Right ventricle myocardium superior (tissue), 1 donor: ENCODE measurements at regions of chr20 and their contacts with region 1.

Region 1: GRCh38 chr20:32227744-32228688 is 20.3 kb downstream of the POFUT1 start:
- DNase-seq: peak; percentile 48
- ATAC-seq: peak; percentile 84

Region 2: DNA sequence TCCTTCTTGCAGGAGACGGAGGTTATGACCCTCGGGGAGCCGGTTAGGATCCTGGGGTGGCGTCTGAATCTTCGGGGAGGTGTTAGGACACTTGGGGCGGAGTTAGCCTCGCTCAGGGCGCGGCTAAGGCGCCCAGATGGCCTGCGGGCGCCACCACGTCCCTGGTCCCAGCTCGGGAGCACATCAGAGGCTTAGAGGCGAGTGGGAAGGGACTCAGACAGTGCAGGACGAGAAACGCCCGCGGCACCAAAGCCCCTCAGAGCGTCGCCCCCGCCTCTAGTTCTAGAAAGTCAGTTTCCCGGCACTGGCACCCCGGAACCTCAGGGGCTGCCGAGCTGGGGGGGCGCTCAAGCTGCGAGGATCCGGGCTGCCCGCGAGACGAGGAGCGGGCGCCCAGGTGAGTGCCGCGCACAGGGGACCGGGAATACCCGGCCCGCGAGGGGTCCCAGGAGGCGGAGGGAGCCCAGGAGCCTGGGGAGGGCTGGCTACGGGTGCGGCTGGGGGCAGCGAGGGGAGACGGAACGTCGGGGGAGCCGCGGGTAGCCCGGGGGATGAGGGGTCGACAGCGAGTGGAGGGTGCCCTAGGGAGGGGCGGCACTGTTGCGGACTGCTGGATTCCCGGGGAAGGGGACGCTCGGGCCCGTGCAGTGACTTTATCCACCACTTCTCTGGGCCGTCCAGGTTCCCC is 175.8 kb before region 1 on chr20 and contains the start of gene HCK:
- intact Hi-C with region 1: no loop called
- DNase-seq: peak; percentile 76
- ATAC-seq: peak; percentile 83
- total RNA-seq, gene HCK: 4.9 TPM

Region 3: DNA sequence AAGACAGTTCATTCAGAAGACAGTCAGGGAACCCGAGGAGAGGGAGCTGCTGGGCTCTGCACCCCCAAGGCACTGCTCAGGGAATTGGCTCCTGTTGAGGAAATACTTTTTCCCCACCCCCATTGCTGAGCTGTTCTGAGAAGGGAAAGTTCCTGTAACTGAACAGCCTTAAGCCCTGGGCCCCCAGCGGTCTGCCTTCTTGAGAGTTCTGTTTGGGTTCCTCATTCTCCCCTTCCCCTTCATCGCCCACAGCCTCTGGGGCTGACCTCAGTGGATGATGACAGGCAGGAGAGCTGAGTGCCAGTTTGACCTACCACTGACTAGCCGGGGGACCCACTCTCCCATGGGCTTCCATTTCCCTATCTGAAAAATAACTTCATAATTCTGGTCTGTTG is 165.2 kb before region 1 on chr20:
- intact Hi-C with region 1: no loop called
- DNase-seq: peak; percentile 83
- ATAC-seq: peak; percentile 77

Region 4: GRCh38 chr20:32277361-32278198 is 49.6 kb after region 1 on chr20 and contains the start of gene KIF3B:
- intact Hi-C with region 1: loop called (anchors 10 kb)
- DNase-seq: peak; percentile 91
- ATAC-seq: peak; percentile 97
- total RNA-seq, gene KIF3B: 8.6 TPM